ENCODE measurements at regions of chr12 and their contacts with region 1.

Region 1: DNA sequence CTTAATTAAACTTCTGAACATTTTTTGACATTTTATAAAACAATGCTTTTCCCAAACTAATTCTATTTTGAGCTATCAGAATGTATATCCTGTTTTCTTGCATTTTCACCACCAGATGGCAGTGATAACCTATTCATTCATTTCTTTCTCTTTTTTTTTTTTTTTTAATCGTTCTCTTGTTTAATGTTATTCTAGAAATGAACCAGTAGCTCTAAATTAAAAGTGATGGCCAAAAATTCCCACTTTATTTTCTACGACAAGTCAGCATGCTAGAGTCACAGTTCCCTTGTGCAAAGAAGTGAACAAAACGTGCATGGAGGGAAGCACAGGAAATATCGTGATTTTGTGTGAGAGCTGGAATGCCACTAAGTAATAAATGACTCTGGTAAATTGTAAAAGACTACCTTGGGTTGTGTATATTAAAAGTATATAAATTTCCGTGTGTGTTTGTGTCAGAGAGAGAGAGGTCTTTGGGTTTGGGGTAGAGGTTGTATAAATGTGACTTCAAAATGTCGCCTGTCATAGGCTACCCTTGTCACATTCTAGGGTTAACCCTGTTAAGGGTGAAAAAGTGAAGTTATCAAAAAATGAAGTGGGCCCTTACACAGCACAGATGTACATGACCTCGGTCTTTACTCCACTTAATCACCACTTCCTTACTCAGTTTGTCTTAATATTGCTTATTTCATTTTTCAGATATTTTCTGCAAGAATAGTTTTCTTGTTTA is 40.4 kb upstream of the LDHB start:
- DNase-seq: no peak
- H3K4me3 Mint-ChIP-seq: no peak overlapping the region
- H3K27ac Mint-ChIP-seq: no peak overlapping the region
- H3K4me1 Mint-ChIP-seq: peaks cover 5% of the 10 kb centered on the region
- H3K27me3 Mint-ChIP-seq: no peaks in the 10 kb centered on the region

Region 2: GRCh38 chr12:21989819-21990412 is 291.8 kb after region 1 on chr12:
- CTCF ChIA-PET with region 1: interaction called, 31 read pairs
- DNase-seq: no peak
- H3K4me3 Mint-ChIP-seq: no peak overlapping the region
- H3K27ac Mint-ChIP-seq: no peak overlapping the region
- H3K4me1 Mint-ChIP-seq: peaks cover 10% of the 10 kb centered on the region
- H3K27me3 Mint-ChIP-seq: peaks cover 12% of the 10 kb centered on the region

Region 3: GRCh38 chr12:22018860-22019259 is 320.8 kb after region 1 on chr12:
- CTCF ChIA-PET with region 1: interaction called, 31 read pairs
- DNase-seq: no peak
- H3K4me3 Mint-ChIP-seq: no peak overlapping the region
- H3K27ac Mint-ChIP-seq: no peak overlapping the region
- H3K4me1 Mint-ChIP-seq: no peaks in the 10 kb centered on the region
- H3K27me3 Mint-ChIP-seq: no peaks in the 10 kb centered on the region

Measured in activated naive CD4-positive, alpha-beta T cell treated with anti-CD3 and anti-CD28 coated beads, Interleukin-2, amount 10 ng/mL, durations not matched to agents 7 days and 5 days (primary cell).